Caco-2 (cell line): ENCODE measurements at regions of chr5 and their contacts with region 1.

Region 1: GRCh38 chr5:150801117-150801927 is 22.8 kb downstream of the SMIM3 start:
- DNase-seq: peak in 1 of 2 experiments; percentile 76
- H3K4me3 ChIP-seq: peak overlapping the region; percentile 28
- H3K4me3 Mint-ChIP-seq: peak overlapping the region; percentile 76
- H3K27ac Mint-ChIP-seq: peak overlapping the region; percentile 69
- H3K4me1 ChIP-seq: 0 out of 2 replicates have a peak, but pooled peaks cover 6% of the 10 kb centered on the region
- H3K4me1 Mint-ChIP-seq: peaks cover 6% of the 10 kb centered on the region
- H3K27me3 ChIP-seq: no peaks in the 10 kb centered on the region
- H3K27me3 Mint-ChIP-seq: no peaks in the 10 kb centered on the region
- CTCF ChIP-seq: peak; percentile 61

Region 2: DNA sequence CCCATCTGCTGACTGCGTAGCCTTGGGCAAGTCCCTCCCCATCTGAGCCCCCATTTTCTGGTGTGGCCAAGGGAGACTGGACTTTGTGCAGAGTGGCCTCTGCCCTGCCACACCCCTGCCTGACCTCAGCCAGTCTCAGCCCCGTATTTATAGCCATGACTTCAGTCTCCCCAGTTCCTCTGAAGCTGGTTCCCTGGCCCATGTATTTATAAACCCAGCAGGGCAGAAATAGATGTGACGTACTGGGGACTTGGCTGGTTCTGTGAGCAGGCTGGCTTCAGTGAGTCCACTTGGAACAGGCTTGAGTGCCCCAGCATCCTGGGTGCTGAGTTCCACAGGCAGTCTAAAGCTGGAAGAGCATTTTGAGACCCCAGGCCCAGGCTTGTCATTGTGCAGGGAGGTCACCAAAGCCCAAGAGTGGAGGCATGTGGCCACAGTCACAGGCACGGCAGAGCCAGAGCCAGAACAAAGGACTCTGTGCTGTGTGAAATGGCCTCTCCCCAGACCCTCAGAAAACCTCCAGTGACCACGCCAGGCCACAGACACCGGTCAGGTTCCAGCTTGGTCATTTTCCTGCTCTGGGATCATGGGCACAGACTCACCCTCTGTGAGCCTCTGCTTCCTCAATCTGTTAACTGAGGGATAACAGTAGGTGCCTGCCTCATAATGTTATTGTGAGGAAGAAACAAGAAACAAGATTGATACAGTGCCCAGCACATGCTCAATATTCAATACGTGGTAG is 191.3 kb before region 1 on chr5:
- CTCF ChIA-PET with region 1: no interaction called
- POLR2A ChIA-PET with region 1: no interaction called
- intact Hi-C with region 1: no loop called
- DNase-seq: peak; percentile 34 to 52
- H3K4me3 ChIP-seq: no peak overlapping the region
- H3K4me3 Mint-ChIP-seq: no peak overlapping the region
- H3K27ac Mint-ChIP-seq: no peak overlapping the region
- H3K4me1 ChIP-seq: peaks cover 32% of the 10 kb centered on the region
- H3K4me1 Mint-ChIP-seq: peaks cover 9% of the 10 kb centered on the region
- H3K27me3 ChIP-seq: no peaks in the 10 kb centered on the region
- H3K27me3 Mint-ChIP-seq: no peaks in the 10 kb centered on the region
- CTCF ChIP-seq: no peak

Region 3: GRCh38 chr5:150778517-150779396 is 22.6 kb before region 1 on chr5 and contains the start of gene SMIM3:
- CTCF ChIA-PET with region 1: interaction called, 9 read pairs
- POLR2A ChIA-PET with region 1: no interaction called
- intact Hi-C with region 1: loop called (anchors 1 kb)
- DNase-seq: peak; percentile 86 to 89
- H3K4me3 ChIP-seq: peak within 1 kb of the TSS; percentile 75
- H3K4me3 Mint-ChIP-seq: peak within 1 kb of the TSS; percentile 91
- H3K27ac Mint-ChIP-seq: peak within 1 kb of the TSS; percentile 80
- H3K4me1 ChIP-seq: peaks cover 34% of the 10 kb centered on the region
- H3K4me1 Mint-ChIP-seq: peaks cover 32% of the 10 kb centered on the region
- H3K27me3 ChIP-seq: no peaks in the 10 kb centered on the region
- H3K27me3 Mint-ChIP-seq: no peaks in the 10 kb centered on the region
- CTCF ChIP-seq: peak; percentile 35 to 83
- total RNA-seq, gene SMIM3: 19.2 and 19.4 TPM in 2 replicates